Left ventricle myocardium inferior (tissue), 1 donor: ENCODE measurements at regions of chr3 and their contacts with region 1.

Region 1: DNA sequence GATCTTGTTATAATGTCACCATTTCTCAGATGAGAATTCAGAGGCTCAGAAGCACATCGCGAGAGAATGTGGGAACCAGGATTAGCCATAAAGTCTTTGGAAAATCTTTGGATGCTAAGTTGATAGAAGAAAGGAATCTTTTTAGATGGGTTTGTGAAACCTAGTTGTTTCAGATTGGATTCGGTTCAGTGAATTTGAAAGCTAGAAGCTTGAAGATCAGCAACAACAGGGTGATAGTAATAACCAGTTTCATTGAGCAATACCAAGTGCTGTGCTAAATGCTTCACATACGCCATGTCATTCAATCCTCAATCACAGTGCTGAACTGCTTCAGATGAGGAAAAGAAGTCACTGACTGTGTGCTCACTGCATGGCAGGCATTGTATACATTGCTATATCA is 47.4 kb upstream of the MITF start:
- DNase-seq: no peak
- H3K4me3 ChIP-seq: no peak overlapping the region
- H3K27ac ChIP-seq: no peak overlapping the region
- H3K4me1 ChIP-seq: peaks cover 8% of the 10 kb centered on the region
- H3K27me3 ChIP-seq: peaks cover 9% of the 10 kb centered on the region
- CTCF ChIP-seq: no peak

Region 2: DNA sequence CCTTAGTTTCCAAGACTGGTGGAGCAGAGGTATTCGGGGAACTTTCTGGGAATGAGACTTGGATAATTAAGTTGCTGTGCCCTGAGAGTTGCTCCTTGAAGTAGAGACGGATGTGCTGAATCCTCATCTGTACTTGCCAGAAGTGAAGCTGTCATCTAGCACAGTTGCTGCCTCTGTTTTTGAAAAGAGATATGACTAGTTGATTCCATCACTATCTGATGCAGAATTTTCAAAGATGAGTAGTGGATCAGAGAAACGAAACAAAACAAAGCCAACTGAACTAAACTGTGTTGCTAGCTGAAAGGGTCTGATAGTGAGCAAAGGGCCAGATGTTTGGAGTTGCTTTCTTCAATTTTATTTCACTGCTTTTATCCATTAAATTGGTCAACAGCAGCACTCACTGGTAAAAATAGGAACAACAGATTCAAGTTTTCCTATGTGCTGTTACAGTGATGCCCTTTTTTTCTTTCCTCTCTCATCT is 100.1 kb after region 1 on chr3:
- intact Hi-C with region 1: loop called (anchors 5 kb)
- DNase-seq: no peak
- H3K4me3 ChIP-seq: peak overlapping the region; percentile 4
- H3K27ac ChIP-seq: peak overlapping the region; percentile 62
- H3K4me1 ChIP-seq: peaks cover 63% of the 10 kb centered on the region
- H3K27me3 ChIP-seq: no peaks in the 10 kb centered on the region
- CTCF ChIP-seq: peak; percentile 60

Region 3: GRCh38 chr3:69855436-69856162 is 163.7 kb after region 1 on chr3:
- intact Hi-C with region 1: loop called (anchors 5 kb)
- DNase-seq: no peak
- H3K4me3 ChIP-seq: no peak overlapping the region
- H3K27ac ChIP-seq: peak overlapping the region; percentile 66
- H3K4me1 ChIP-seq: peaks cover 57% of the 10 kb centered on the region
- H3K27me3 ChIP-seq: no peaks in the 10 kb centered on the region
- CTCF ChIP-seq: peak; percentile 59

Region 4: GRCh38 chr3:69948246-69948862 is 256.5 kb after region 1 on chr3:
- intact Hi-C with region 1: loop called (anchors 5 kb)
- DNase-seq: no peak
- H3K4me3 ChIP-seq: no peak overlapping the region
- H3K27ac ChIP-seq: no peak overlapping the region
- H3K4me1 ChIP-seq: peaks cover 24% of the 10 kb centered on the region
- H3K27me3 ChIP-seq: no peaks in the 10 kb centered on the region
- CTCF ChIP-seq: peak; percentile 68